ENCODE measurements at regions of chr16 and their contacts with region 1.

Region 1: GRCh38 chr16:84617791-84618580 is at the start of gene COTL1:
- DNase-seq: peak; percentile 98
- H3K4me3 Mint-ChIP-seq: peak within 1 kb of the TSS; percentile 90
- H3K27ac Mint-ChIP-seq: peak within 1 kb of the TSS; percentile 63
- H3K4me1 Mint-ChIP-seq: peaks cover 25% of the 10 kb centered on the region
- H3K27me3 Mint-ChIP-seq: no peaks in the 10 kb centered on the region
- CTCF ChIP-seq: no peak
- total RNA-seq, gene COTL1: 151 and 269 TPM in 2 replicates

Region 2: GRCh38 chr16:84504420-84505248 is 113.4 kb before region 1 on chr16 and contains the start of gene MEAK7:
- CTCF ChIA-PET with region 1: interaction called, 11 read pairs
- POLR2A ChIA-PET with region 1: interaction called, 9 read pairs
- intact Hi-C with region 1: no loop called
- DNase-seq: peak; percentile 99
- H3K4me3 Mint-ChIP-seq: peak within 1 kb of the TSS; percentile 84
- H3K27ac Mint-ChIP-seq: peak within 1 kb of the TSS; percentile 88
- H3K4me1 Mint-ChIP-seq: peaks cover 52% of the 10 kb centered on the region
- H3K27me3 Mint-ChIP-seq: no peaks in the 10 kb centered on the region
- CTCF ChIP-seq: no peak
- total RNA-seq, gene MEAK7: 62.3 and 66.8 TPM in 2 replicates

Region 3: DNA sequence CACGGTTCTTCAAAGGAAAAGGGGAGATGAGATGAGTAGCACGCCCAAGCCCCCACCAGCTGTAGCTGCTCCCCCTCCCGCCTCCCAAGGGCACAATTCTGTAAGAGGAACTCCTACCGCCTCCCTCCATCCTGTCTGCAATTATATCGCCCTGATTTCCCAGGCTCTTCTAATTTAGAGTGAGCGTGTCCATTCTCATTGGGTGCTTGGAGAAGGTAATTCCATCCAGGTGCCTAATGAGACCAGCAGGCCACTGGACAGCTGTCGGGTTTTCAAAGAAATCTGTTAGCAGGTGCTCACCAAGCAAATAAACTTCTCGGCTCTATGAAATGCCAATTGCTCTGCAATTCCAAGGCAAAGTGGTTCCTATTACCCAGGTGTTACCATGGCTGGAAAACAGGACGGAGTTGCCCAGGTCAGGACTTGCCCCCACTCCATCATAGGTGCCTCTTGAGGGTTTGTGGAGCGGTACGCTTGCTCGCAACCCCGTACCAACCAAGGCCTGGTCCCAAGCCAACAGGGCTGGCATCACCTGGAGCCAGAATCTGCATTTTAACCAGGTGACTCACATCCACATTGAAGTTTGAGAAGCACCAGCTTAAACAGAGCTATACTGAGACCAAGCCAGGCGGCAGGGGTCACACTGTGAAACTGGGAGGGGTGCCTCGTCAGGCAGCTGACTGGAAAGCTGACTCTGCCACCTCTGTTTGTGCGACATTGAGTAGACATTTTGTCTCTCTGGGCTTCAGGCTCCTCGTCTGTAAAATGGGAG is 97.1 kb before region 1 on chr16:
- CTCF ChIA-PET with region 1: interaction called, 12 read pairs
- POLR2A ChIA-PET with region 1: no interaction called
- intact Hi-C with region 1: no loop called
- DNase-seq: peak; percentile 49
- H3K4me3 Mint-ChIP-seq: no peak overlapping the region
- H3K27ac Mint-ChIP-seq: no peak overlapping the region
- H3K4me1 Mint-ChIP-seq: no peaks in the 10 kb centered on the region
- H3K27me3 Mint-ChIP-seq: no peaks in the 10 kb centered on the region
- CTCF ChIP-seq: no peak

Region 4: GRCh38 chr16:84647828-84648594 is 30.0 kb after region 1 on chr16 and contains the start of gene KLHL36:
- CTCF ChIA-PET with region 1: interaction called, 11 read pairs
- POLR2A ChIA-PET with region 1: interaction called, 7 read pairs
- intact Hi-C with region 1: no loop called
- DNase-seq: peak; percentile 23
- H3K4me3 Mint-ChIP-seq: peak within 1 kb of the TSS; percentile 86
- H3K27ac Mint-ChIP-seq: peak within 1 kb of the TSS; percentile 66
- H3K4me1 Mint-ChIP-seq: peaks cover 24% of the 10 kb centered on the region
- H3K27me3 Mint-ChIP-seq: no peaks in the 10 kb centered on the region
- CTCF ChIP-seq: no peak
- total RNA-seq, gene KLHL36: 38.4 and 41.9 TPM in 2 replicates

Region 5: DNA sequence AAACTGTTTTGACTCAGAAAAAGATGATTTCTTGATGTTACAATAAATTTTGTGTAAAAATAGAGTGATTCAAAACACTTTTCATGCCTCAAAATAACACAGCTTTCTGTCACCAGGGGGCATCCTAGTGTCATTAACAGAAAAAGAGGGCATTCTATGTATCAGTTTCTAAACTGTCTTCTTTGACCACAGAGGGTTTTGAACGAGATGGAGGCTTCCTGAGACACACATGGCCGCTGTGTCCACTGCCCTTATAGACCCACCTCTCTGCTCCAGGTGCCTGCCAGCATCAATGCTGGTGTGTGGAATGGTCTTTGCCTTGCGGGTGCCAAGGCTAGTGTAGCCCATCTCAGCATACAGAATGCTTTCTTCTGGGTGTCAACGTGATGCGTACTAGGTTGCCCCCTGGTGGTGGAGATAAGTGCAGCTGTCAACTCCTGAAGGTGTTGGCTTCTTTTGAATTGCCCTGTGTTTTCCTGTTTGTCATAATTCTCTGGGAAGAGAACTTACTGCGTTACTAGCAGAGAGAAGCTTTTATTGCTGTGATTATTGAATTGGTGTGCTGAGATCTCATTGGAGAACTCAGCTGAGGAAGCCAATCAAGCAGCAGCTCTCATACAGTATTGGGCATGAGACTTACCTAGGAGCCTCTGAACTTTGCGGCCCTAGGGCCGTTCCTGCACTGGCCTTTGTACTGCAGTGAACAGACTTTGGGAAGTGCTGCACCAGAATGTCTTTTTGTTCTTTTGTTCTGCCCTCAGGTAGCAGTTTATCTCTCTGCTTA is 120.5 kb after region 1 on chr16:
- CTCF ChIA-PET with region 1: interaction called, 24 read pairs
- POLR2A ChIA-PET with region 1: interaction called, 5 read pairs
- intact Hi-C with region 1: loop called (anchors 1 kb)
- DNase-seq: peak; percentile 86
- H3K4me3 Mint-ChIP-seq: no peak overlapping the region
- H3K27ac Mint-ChIP-seq: peak overlapping the region; percentile 59
- H3K4me1 Mint-ChIP-seq: peaks cover 41% of the 10 kb centered on the region
- H3K27me3 Mint-ChIP-seq: no peaks in the 10 kb centered on the region
- CTCF ChIP-seq: peak; percentile 75

Region 6: GRCh38 chr16:84952335-84953189 is 334.6 kb after region 1 on chr16:
- CTCF ChIA-PET with region 1: no interaction called
- POLR2A ChIA-PET with region 1: no interaction called
- intact Hi-C with region 1: loop called (anchors 5 kb)
- DNase-seq: peak; percentile 83
- H3K4me3 Mint-ChIP-seq: no peak overlapping the region
- H3K27ac Mint-ChIP-seq: no peak overlapping the region
- H3K4me1 Mint-ChIP-seq: no peaks in the 10 kb centered on the region
- H3K27me3 Mint-ChIP-seq: no peaks in the 10 kb centered on the region
- CTCF ChIP-seq: peak; percentile 76